ENCODE measurements at regions of chr1 and their contacts with region 1.

Region 1: GRCh38 chr1:42766741-42767509 is at the starts of genes C1orf50 and P3H1:
- DNase-seq: peak; percentile 100
- ATAC-seq: peak; percentile 92
- H3K4me3 ChIP-seq: peak within 1 kb of the TSS; percentile 71 to 92 (median 76)
- H3K4me3 Mint-ChIP-seq: no peak within 1 kb of the TSS
- H3K27ac ChIP-seq: peak within 1 kb of the TSS; percentile 53 to 83
- H3K27ac Mint-ChIP-seq: peak within 1 kb of the TSS; percentile 98
- H3K4me1 ChIP-seq: peaks cover 27 to 31% of the 10 kb centered on the region in 2 donors
- H3K4me1 Mint-ChIP-seq: peaks cover 24% of the 10 kb centered on the region
- H3K27me3 ChIP-seq: no peaks in the 10 kb centered on the region
- H3K27me3 Mint-ChIP-seq: no peaks in the 10 kb centered on the region
- CTCF ChIP-seq: no peak
- total RNA-seq, gene C1orf50: 13.1 and 17.1 TPM in 2 replicates
- total RNA-seq, gene P3H1: 42.2 and 46.1 TPM in 2 replicates

Region 2: DNA sequence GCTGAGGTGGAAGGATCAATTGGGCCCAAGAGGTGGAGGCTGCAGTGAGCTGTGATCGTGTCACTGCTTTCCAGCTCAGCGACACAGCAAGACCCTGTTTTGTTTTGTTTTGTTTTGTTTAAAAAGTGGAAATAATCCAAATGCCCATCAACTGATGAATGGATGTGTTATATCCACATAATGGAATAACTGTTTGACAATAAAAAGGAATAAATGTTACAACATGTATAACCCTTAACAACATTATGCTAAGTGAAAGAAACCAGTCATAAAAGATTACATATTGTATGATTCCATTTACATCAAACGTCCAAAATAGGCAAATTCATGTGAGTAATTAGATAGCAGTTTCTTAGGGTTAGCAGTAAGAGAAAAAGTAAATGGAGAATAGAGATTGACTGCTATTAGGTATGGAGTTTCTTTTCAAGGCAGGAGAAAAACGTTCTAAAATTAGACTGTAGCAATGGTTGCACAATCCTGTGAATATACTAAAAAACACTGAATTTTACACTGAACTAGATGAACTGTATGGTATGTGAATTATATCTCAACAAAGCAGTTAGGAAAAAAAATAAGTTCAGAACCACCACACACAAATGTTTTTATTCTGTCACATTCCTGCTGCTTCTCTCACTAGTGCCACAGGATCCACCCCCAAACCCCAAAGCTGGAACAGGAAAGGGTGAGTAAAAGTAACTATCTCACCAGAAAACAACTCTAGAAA is 447.6 kb before region 1 on chr1:
- CTCF ChIA-PET with region 1: no interaction called
- POLR2A ChIA-PET with region 1: no interaction called
- intact Hi-C with region 1: no loop called
- DNase-seq: no peak
- ATAC-seq: no peak
- H3K4me3 ChIP-seq: no peak overlapping the region
- H3K4me3 Mint-ChIP-seq: no peak overlapping the region
- H3K27ac ChIP-seq: peak overlapping the region in 1 of 2 donors; percentile 60
- H3K27ac Mint-ChIP-seq: no peak overlapping the region
- H3K4me1 ChIP-seq: peaks cover 14 to 18% of the 10 kb centered on the region in 2 donors
- H3K4me1 Mint-ChIP-seq: peaks cover 73% of the 10 kb centered on the region
- H3K27me3 ChIP-seq: no peaks in the 10 kb centered on the region
- H3K27me3 Mint-ChIP-seq: no peaks in the 10 kb centered on the region
- CTCF ChIP-seq: no peak

Region 3: DNA sequence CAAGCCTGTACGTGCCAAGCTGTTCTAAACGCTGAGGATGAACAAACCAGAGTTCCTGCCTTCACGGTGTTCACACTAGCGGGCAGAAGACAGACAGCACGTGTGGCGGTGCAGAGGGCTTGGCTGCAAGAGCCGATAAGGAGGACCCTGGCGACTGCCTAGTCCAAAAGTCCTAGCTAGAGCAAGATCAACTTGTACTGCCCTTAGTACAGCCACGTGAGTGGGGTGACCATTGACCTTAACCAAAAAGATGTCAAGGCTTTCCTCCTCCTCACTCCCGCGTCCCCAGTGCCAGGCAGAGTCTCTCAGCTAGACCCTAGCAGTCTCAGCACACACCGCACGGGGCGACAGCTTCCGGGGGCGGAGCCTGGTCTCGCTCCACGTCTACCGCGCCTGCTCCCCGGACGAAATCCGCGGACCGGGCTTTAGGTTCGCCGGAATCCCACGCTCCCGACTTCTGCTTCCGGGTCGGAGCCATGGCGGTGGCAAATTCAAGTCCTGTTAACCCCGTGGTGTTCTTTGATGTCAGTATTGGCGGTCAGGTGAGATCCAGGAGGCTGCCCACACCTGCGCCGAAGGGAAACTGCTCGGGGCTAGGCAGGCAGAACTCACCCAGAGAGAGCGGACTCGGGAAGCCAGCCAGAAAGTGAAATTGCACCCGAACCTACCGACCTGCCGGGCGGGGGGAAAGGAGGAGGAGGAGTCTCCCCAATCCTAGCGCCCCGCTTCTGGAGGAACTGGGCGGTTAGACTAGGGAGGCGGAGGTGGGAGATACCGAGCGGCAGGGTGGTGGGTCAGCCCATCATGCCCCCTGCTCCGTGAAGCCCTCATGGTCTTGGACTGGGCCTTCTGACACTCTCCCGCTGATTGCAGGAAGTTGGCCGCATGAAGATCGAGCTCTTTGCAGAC is 108.7 kb before region 1 on chr1 and contains the start of gene PPIH:
- CTCF ChIA-PET with region 1: interaction called, 8 read pairs
- POLR2A ChIA-PET with region 1: interaction called, 3 read pairs
- intact Hi-C with region 1: loop called (anchors 2 kb)
- DNase-seq: peak; percentile 94
- ATAC-seq: peak; percentile 99
- H3K4me3 ChIP-seq: peak within 1 kb of the TSS; percentile 45 to 90 (median 84)
- H3K4me3 Mint-ChIP-seq: peak within 1 kb of the TSS; percentile 99
- H3K27ac ChIP-seq: peak within 1 kb of the TSS; percentile 62 to 76
- H3K27ac Mint-ChIP-seq: peak within 1 kb of the TSS; percentile 93
- H3K4me1 ChIP-seq: peaks cover 15 to 22% of the 10 kb centered on the region in 2 donors
- H3K4me1 Mint-ChIP-seq: peaks cover 32% of the 10 kb centered on the region
- H3K27me3 ChIP-seq: no peaks in the 10 kb centered on the region
- H3K27me3 Mint-ChIP-seq: no peaks in the 10 kb centered on the region
- CTCF ChIP-seq: no peak
- total RNA-seq, gene PPIH: 48.8 and 50.3 TPM in 2 replicates

Region 4: GRCh38 chr1:42700006-42700405 is 66.9 kb before region 1 on chr1:
- CTCF ChIA-PET with region 1: no interaction called
- POLR2A ChIA-PET with region 1: no interaction called
- intact Hi-C with region 1: no loop called
- DNase-seq: no peak
- ATAC-seq: no peak
- H3K4me3 ChIP-seq: no peak overlapping the region
- H3K4me3 Mint-ChIP-seq: no peak overlapping the region
- H3K27ac ChIP-seq: no peak overlapping the region
- H3K27ac Mint-ChIP-seq: no peak overlapping the region
- H3K4me1 ChIP-seq: no peaks in the 10 kb centered on the region
- H3K4me1 Mint-ChIP-seq: peaks cover 1% of the 10 kb centered on the region
- H3K27me3 ChIP-seq: no peaks in the 10 kb centered on the region
- H3K27me3 Mint-ChIP-seq: no peaks in the 10 kb centered on the region
- CTCF ChIP-seq: no peak

Region 5: DNA sequence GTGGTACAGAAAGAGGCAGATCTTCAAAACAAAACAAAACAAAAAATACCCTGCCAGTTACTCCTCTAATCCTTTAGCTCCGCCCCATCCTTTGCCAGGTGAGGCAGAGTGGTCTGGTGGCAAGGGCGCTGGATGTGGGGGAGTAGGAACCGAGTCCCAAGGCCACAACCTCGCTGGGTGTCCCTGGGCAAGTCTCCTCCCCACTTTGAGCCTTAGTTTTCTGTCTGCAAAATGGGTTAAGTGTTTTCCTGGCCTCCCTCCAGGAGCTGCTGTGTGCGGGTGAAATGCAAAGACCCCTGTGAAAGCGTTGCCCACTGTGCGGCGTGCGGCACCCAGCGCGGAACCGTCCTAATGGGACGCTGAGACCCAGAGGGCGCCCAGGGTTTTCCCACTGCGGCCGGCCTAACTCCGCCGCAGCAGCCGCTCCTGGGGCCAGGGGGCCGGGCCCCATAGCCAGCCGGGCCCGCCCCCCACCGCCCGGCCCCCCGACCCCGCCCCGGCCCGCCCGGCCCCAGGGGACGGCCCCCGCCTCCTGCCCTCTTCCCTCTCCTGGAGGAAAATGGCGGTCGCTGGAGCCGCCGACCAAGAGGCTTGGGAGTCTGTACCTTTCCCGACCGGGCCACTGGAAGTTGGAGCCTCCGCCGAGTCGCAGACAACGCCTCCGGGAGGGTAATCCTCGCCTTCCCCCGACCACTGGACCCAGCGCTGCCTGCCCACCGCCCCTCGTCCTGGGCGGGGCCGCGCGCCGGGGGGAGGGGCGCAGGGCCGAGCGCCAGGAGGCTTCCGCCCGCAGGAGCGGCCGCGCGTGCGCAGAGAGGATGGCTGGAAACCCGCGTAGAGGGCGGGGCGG is 49.9 kb after region 1 on chr1 and contains the starts of genes ERMAP and SVBP:
- CTCF ChIA-PET with region 1: interaction called, 3 read pairs
- POLR2A ChIA-PET with region 1: interaction called, 3 read pairs
- intact Hi-C with region 1: loop called (anchors 1 kb)
- DNase-seq: peak; percentile 97
- ATAC-seq: peak; percentile 86
- H3K4me3 ChIP-seq: peak within 1 kb of the TSS; percentile 57 to 82 (median 77)
- H3K4me3 Mint-ChIP-seq: peak within 1 kb of the TSS; percentile 89
- H3K27ac ChIP-seq: peak within 1 kb of the TSS; percentile 75 to 82
- H3K27ac Mint-ChIP-seq: peak within 1 kb of the TSS; percentile 92
- H3K4me1 ChIP-seq: peaks cover 13% of the 10 kb centered on the region in 2 donors
- H3K4me1 Mint-ChIP-seq: peaks cover 20% of the 10 kb centered on the region
- H3K27me3 ChIP-seq: no peaks in the 10 kb centered on the region
- H3K27me3 Mint-ChIP-seq: no peaks in the 10 kb centered on the region
- CTCF ChIP-seq: no peak
- total RNA-seq, gene ERMAP: 13.1 and 13.5 TPM in 2 replicates
- total RNA-seq, gene SVBP: 21.9 and 23.2 TPM in 2 replicates

Region 6: GRCh38 chr1:42958488-42959319 is 191.8 kb after region 1 on chr1 and contains the start of gene SLC2A1:
- CTCF ChIA-PET with region 1: no interaction called
- POLR2A ChIA-PET with region 1: no interaction called
- intact Hi-C with region 1: loop called (anchors 1 kb)
- DNase-seq: peak; percentile 97
- ATAC-seq: peak; percentile 89
- H3K4me3 ChIP-seq: peak within 1 kb of the TSS; percentile 76 to 93 (median 87)
- H3K4me3 Mint-ChIP-seq: peak within 1 kb of the TSS; percentile 97
- H3K27ac ChIP-seq: peak within 1 kb of the TSS; percentile 59 to 86
- H3K27ac Mint-ChIP-seq: peak within 1 kb of the TSS; percentile 99
- H3K4me1 ChIP-seq: peaks cover 64 to 85% of the 10 kb centered on the region in 2 donors
- H3K4me1 Mint-ChIP-seq: peaks cover 73% of the 10 kb centered on the region
- H3K27me3 ChIP-seq: no peaks in the 10 kb centered on the region
- H3K27me3 Mint-ChIP-seq: no peaks in the 10 kb centered on the region
- CTCF ChIP-seq: no peak
- total RNA-seq, gene SLC2A1: 240 and 241 TPM in 2 replicates

Region 7: DNA sequence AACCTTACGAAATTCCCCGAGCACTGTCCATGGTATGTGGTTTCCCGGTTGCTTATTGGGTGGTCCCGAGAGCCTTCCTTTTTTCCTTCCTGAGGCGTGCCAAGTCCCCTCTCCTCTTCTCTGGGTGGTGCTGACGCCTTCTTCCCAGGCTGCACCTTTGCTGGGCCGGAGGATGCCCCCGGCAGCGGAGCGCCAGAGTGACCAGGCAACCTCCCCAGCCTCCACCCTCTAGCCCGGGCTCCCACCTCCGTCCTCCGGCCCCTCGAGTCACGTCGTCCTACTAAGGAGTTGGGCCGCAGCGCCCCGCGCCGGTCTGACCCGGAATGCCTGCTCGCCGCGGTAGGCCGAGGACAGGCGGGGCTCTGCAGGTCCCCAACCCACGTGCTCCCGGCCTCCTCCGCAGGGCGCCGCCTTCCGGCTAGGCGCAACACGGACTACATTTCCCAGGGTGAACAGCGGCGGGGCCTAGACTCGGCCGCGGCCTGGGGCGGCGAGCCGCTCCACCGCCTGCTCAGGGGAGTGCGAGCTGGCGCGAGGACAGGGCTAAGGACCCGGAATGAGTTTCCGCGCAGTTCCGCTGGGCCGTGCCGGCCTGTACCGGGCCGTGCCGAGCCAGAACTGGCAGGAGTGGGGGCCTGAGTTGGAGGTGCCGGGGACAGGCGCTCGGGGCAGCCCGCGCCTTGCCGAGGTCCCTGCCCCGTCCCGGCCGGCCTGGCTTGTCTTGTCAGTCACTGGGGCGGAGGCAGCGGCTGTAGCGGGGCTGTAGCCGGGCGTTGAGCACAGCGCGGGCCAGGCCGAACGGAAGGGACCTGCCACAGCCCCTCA is 1179.5 kb after region 1 on chr1 and contains the start of gene IPO13:
- CTCF ChIA-PET with region 1: no interaction called
- POLR2A ChIA-PET with region 1: no interaction called
- intact Hi-C with region 1: loop called (anchors 10 kb)
- DNase-seq: peak; percentile 98
- ATAC-seq: peak; percentile 94
- H3K4me3 ChIP-seq: peak within 1 kb of the TSS; percentile 64 to 90 (median 78)
- H3K4me3 Mint-ChIP-seq: peak within 1 kb of the TSS; percentile 93
- H3K27ac ChIP-seq: peak within 1 kb of the TSS; percentile 95
- H3K27ac Mint-ChIP-seq: peak within 1 kb of the TSS; percentile 98
- H3K4me1 ChIP-seq: peaks cover 15 to 25% of the 10 kb centered on the region in 2 donors
- H3K4me1 Mint-ChIP-seq: peaks cover 39% of the 10 kb centered on the region
- H3K27me3 ChIP-seq: no peaks in the 10 kb centered on the region
- H3K27me3 Mint-ChIP-seq: no peaks in the 10 kb centered on the region
- CTCF ChIP-seq: peak; percentile 71
- total RNA-seq, gene IPO13: 17.1 and 19.7 TPM in 2 replicates